Posterior vena cava (tissue), 2 donors: ENCODE measurements at regions of chr5 and their contacts with region 1.

Region 1: GRCh38 chr5:175181331-175181730 is 262.7 kb downstream of the DRD1 start:
- DNase-seq: no peak

Region 2: DNA sequence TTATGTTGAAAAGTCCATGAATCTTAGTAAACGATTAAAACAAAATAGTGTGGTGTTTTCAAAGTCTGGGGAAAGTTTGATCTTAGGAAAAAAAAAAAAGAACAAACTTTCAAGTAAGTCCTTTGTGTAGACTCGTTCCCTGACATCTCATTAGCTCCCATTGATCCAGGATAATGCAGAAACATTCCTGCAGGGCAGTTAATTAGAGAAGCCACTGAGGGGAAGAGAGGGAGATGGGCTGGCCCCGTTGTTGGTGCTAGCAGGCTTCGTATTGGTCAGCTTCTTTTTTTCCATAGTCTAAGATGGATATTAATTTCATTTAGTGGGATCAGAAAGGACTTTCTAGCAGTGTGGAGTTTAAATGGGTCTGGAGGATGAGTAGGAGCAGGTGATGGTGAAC is 77.6 kb before region 1 on chr5:
- intact Hi-C with region 1: loop called in 1 of 2 experiments (anchors 2 kb)
- DNase-seq: no peak